A673 (cell line): ENCODE measurements at regions of chr5 and their contacts with region 1.

Region 1: DNA sequence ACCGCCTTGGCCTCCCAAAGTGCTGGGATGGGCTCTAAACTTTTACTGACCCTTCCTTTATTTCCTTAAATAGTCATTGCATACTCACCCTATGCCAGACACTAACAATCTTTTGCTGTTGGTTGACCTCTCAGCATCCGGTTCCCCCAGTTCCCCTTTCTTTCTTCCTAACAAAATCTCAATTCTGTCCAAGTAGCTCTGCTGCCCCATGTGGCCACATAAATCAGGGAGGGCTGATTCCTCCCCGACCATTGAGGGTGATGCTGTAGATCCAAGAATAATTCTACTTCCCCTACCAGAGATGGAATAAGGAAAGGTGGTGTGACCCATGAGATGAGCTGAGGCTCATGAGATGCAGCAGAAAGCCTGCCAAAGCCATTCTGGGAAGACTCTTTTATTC is 315.3 kb upstream of the MSX2 start:
- DNase-seq: no peak
- H3K4me3 ChIP-seq: no peak overlapping the region
- H3K27ac ChIP-seq: no peak overlapping the region
- H3K4me1 ChIP-seq: no peaks in the 10 kb centered on the region
- H3K27me3 ChIP-seq: peaks cover 28% of the 10 kb centered on the region
- CTCF ChIP-seq: no peak

Region 2: GRCh38 chr5:174751154-174752000 is 342.3 kb after region 1 on chr5:
- CTCF ChIA-PET with region 1: no interaction called
- POLR2A ChIA-PET with region 1: interaction called, 12 read pairs
- intact Hi-C with region 1: no loop called
- DNase-seq: peak; percentile 20
- H3K4me3 ChIP-seq: peak overlapping the region; percentile 39
- H3K27ac ChIP-seq: no peak overlapping the region
- H3K4me1 ChIP-seq: no peaks in the 10 kb centered on the region
- H3K27me3 ChIP-seq: peaks cover 46% of the 10 kb centered on the region
- CTCF ChIP-seq: no peak